ENCODE measurements at regions of chr10 and their contacts with region 1.

Region 1: DNA sequence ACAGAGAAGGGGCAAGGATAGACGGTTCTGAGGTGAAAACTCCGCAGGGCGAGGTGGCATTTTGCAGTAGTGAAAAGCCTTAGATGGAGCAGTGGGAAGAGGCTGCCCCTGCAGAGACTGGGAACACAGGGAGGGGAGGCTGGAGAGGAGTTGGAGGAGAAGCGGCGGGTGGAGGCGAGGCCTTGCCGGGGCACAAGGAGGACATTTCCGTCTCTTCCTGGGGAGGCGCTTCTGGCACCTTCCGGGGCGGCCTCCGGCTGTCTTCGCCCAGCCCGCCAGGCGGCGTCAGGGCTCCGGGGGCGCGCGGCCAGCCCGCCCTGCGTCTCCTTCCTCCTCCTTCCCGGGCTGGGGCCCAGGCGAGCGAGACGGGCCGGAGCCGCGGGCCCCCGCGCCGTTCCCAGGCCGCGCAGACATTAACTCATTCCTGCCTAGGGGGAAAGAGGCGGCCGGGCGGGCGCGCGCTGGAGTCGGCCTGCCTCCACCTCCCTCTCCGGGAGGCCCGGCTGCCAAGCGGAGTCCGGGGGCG is 42.7 kb downstream of the LDB3 start:
- DNase-seq: peak; percentile 85
- ATAC-seq: peak; percentile 91
- H3K4me3 Mint-ChIP-seq: peak overlapping the region; percentile 76
- H3K27ac Mint-ChIP-seq: peak overlapping the region; percentile 94
- H3K4me1 Mint-ChIP-seq: peaks cover 14% of the 10 kb centered on the region
- H3K27me3 Mint-ChIP-seq: no peaks in the 10 kb centered on the region
- CTCF ChIP-seq: peak; percentile 86

Region 2: DNA sequence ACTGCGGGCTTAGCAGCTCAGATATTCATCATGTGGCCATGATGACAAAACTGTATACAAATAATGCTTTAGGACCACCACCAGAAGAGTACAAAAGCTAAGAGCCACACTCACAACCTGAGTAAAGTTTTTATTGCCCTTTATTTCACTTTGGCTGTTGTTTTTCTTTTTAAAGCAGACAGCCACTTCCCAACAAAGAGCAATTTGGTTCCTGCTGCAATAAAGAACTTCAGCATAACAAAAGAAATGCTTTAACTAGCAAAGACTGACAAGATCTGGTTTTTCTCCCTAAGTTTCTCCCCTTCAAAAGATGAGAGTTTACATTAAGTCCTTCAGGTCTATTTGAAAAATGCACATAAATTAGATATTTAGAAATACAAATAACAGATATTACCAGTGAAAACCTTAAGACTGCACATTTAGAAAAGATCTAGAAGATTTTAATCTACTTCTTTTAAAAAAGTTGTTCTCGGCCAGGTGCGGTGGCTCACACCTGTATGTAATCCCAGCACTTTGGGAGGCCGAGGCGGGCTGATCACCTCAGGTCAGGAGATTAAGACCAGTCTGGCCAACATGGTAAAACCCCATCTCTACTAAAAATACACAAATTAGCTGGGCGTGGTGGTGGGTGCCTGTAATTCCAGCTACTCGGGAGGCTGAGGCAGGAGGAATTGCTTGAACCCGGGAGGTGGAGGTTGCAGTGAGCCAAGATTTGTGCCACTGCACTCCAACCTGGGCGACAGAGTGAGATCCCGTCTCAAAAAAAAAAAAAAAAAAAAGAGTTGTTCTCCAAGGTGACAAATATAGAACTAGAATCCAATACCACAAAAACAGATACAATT is 248.9 kb before region 1 on chr10:
- CTCF ChIA-PET with region 1: no interaction called
- POLR2A ChIA-PET with region 1: no interaction called
- intact Hi-C with region 1: no loop called
- DNase-seq: no peak
- ATAC-seq: no peak
- H3K4me3 Mint-ChIP-seq: no peak overlapping the region
- H3K27ac Mint-ChIP-seq: peak overlapping the region; percentile 55
- H3K4me1 Mint-ChIP-seq: no peaks in the 10 kb centered on the region
- H3K27me3 Mint-ChIP-seq: no peaks in the 10 kb centered on the region
- CTCF ChIP-seq: no peak

Region 3: DNA sequence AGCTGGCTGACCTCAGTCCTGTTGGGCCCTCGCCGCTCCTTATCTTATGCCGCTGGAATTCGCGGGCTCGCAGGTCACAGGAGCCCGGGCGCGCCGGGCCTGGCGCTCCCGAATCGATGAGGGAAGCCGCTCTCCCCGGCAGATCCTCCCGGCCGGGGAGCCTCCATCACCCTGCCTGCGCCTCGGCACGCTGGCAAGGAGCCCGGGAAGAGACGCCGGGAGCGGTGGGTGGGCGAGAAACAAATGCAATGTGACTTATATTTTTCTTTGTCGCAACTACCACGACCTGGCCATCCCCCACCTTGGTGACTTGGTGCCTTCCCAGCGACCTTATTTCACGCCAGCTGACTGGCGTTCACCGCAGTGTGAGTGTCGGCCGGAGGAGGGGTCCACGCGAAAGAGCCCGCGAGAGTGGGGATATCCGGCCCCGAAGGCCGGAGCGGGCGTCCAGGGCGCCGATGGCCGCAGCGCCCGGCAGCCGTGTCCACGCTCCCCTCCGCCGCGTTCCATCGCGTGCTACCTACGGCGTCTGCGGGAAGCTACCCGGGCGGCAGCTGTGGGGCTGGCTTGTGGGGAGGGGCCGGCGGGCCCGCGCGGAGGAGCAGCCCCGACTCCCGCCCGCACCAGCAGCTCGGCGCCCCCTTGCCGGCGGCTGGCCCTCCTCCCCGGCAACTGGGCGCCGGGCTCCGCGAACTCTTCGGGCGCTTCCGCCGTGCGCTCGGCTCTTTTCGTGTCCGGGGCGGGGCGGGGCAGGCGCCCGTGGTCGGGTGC is 44.9 kb after region 1 on chr10:
- CTCF ChIA-PET with region 1: no interaction called
- POLR2A ChIA-PET with region 1: interaction called, 6 read pairs
- intact Hi-C with region 1: loop called (anchors 5 kb)
- DNase-seq: peak; percentile 86
- ATAC-seq: peak; percentile 97
- H3K4me3 Mint-ChIP-seq: peak overlapping the region; percentile 81
- H3K27ac Mint-ChIP-seq: peak overlapping the region; percentile 81
- H3K4me1 Mint-ChIP-seq: peaks cover 40% of the 10 kb centered on the region
- H3K27me3 Mint-ChIP-seq: peaks cover 27% of the 10 kb centered on the region
- CTCF ChIP-seq: no peak